ENCODE measurements at regions of chr2 and their contacts with region 1.

Region 1: DNA sequence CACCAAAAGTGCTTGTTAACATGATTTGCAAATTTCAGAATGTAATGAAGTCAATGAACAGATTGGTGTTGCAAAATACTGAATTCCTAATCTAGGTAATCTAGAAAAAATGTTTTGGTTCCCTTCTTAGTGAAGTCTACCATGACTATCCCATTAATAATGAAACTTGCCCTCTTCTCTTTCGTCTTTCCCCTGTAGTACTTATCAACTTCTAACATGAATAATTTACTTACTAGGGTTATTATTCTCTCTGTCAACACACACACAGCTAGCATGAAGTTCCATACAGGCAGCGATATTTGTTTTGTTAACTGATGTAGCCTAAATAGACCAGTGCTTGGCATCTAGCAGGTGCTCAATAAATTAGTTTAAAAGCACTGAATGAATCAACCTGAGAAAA is 160.2 kb downstream of the NCK2 start:
- DNase-seq: no peak
- H3K4me3 Mint-ChIP-seq: no peak overlapping the region
- H3K27ac Mint-ChIP-seq: no peak overlapping the region
- H3K4me1 Mint-ChIP-seq: peaks cover 20% of the 10 kb centered on the region
- H3K27me3 Mint-ChIP-seq: no peaks in the 10 kb centered on the region

Region 2: DNA sequence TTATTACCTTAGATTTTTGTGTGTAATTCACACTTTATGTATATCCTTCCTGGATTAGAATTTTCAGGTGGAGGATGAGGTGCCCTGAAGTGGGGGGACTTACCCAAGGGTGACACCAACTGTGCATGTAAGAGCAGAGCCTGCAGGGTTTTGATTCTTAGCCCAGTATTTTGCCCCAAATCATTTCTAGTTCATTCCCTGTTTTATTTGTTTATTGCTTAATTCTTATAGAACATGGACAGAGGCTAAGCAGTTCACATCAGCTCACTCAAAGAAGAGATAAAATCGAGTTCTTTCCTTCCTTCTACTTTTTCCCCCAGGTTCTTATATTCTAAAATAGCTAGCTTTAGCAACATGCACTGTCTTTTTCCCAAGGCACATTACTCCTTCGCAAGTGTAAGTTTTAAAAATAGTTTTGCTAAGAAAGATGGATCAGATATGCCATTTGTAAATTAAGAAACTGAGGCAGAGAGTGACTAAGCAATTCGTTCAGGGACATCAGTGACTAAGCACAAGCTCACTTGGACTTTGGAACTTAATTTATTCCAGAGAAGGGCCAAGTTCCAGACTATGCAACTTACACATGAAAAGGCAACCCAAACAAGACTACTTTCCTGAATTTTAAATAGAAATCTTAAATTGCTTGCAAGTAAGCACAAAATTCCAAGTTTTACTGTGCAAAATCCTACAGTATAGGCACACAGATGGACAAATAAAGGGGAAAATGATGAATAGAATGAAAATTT is 1478.9 kb before region 1 on chr2:
- intact Hi-C with region 1: no loop called
- DNase-seq: no peak
- H3K4me3 Mint-ChIP-seq: no peak overlapping the region
- H3K27ac Mint-ChIP-seq: no peak overlapping the region
- H3K4me1 Mint-ChIP-seq: no peaks in the 10 kb centered on the region
- H3K27me3 Mint-ChIP-seq: no peaks in the 10 kb centered on the region

Region 3: DNA sequence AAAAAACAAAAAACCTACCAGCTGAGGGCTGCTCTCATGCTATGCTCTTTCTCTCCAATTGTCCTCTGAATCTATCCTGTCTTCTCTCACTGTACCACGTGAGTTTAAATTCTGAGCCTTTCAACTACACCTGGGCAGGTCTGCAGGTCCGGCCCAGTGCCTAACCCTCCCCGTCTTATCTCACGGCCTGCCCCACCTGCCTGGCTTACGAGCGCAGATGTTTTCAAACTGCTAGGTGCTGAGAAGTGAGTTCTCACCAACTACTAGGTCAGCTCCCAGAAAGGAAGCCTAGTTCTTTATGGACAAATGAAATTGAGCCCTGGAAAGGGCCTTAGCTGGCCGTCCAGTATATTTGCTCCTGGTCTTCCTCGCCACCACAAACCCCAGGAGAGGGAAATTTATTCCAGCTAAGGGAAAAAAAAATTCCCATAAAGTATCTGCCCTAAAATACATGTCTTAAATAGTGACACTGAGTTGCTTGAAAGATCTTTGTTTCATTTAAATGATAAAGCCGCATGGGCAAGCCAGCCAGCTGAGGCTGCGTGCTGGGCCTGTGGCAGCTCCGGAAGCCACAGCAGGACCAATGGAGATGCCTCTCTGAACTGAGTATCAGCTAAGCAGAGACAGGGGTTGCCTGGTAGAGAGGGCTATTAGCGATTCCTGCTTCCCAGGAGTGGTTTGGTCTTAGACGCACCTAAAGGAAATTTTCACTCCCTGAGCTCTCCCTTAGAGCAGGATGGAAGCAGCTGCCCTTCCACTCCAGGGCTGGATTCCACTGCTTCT is 252.7 kb before region 1 on chr2:
- intact Hi-C with region 1: loop called (anchors 10 kb)
- DNase-seq: no peak
- H3K4me3 Mint-ChIP-seq: no peak overlapping the region
- H3K27ac Mint-ChIP-seq: no peak overlapping the region
- H3K4me1 Mint-ChIP-seq: no peaks in the 10 kb centered on the region
- H3K27me3 Mint-ChIP-seq: peaks cover 5% of the 10 kb centered on the region

Region 4: GRCh38 chr2:105822186-105822585 is 82.8 kb before region 1 on chr2:
- intact Hi-C with region 1: no loop called
- DNase-seq: no peak
- H3K4me3 Mint-ChIP-seq: no peak overlapping the region
- H3K27ac Mint-ChIP-seq: peak overlapping the region; percentile 51
- H3K4me1 Mint-ChIP-seq: peaks cover 69% of the 10 kb centered on the region
- H3K27me3 Mint-ChIP-seq: no peaks in the 10 kb centered on the region

Region 5: GRCh38 chr2:106038601-106039375 is 133.8 kb after region 1 on chr2:
- intact Hi-C with region 1: no loop called
- DNase-seq: no peak
- H3K4me3 Mint-ChIP-seq: no peak overlapping the region
- H3K27ac Mint-ChIP-seq: no peak overlapping the region
- H3K4me1 Mint-ChIP-seq: no peaks in the 10 kb centered on the region
- H3K27me3 Mint-ChIP-seq: peaks cover 6% of the 10 kb centered on the region

Measured in activated T-helper 1 cell treated with anti-CD3 and anti-CD28 coated beads, Interleukin-12 subunit alpha, Interleukin-12 subunit beta, Interleukin-2, Interleukin-4 antibody, amounts not matched to agents 30 ng/mL and 10 ng/mL and 1 ng/mL, durations not matched to agents 14 hours and 24 hours and 36 hours (primary cell).